Lower leg skin (tissue), 4 donors: ENCODE measurements at regions of chr1 and their contacts with region 1.

Region 1: GRCh38 chr1:174791863-174792262 is 207.9 kb upstream of the CACYBP start:
- DNase-seq: no peak
- H3K4me3 ChIP-seq: no peak overlapping the region
- CTCF ChIP-seq: no peak
- POLR2A ChIP-seq: no peak

Region 2: GRCh38 chr1:175099916-175100315 is 308.1 kb after region 1 on chr1:
- intact Hi-C with region 1: no loop called
- DNase-seq: peak in 1 of 2 donors; percentile 37
- H3K4me3 ChIP-seq: no peak overlapping the region
- CTCF ChIP-seq: no peak
- POLR2A ChIP-seq: no peak

Region 3: DNA sequence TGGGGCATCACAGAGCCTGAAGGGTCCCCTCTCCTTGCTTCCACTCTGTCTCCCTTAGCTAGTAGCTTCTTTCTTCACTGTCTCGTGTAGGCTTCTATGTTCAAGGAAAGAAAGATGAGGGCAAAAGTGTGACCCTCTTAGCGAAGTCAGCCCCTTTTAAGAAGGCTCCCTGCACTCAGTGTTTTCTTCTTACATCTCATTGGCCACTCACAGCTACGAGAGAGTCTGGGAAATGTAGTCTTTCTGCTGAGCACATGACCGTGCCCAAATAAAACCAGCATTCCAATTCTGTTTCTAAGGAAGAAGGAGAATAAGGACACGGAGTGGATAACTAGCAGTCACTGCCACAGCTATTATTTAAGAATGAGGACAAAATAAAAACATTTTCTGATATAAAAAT is 1056.5 kb after region 1 on chr1:
- intact Hi-C with region 1: loop called (anchors 5 kb)
- DNase-seq: peak in 1 of 2 donors; percentile 4
- H3K4me3 ChIP-seq: no peak overlapping the region
- CTCF ChIP-seq: no peak
- POLR2A ChIP-seq: no peak